H1 (cell line): ENCODE measurements at regions of chr5 and their contacts with region 1.

Region 1: GRCh38 chr5:42889311-42889933 is 77.7 kb upstream of the SELENOP start:
- DNase-seq: peak; percentile 43 to 81
- H3K4me3 ChIP-seq: no peak overlapping the region
- H3K27ac ChIP-seq: no peak overlapping the region
- H3K4me1 ChIP-seq: no peaks in the 10 kb centered on the region
- H3K27me3 ChIP-seq: no peaks in the 10 kb centered on the region
- CTCF ChIP-seq: peak; percentile 53 to 84 (median 83)
- EP300 ChIP-seq: no peak
- POLR2A ChIP-seq: no peak
- RAD21 ChIP-seq: peak; percentile 95 to 98

Region 2: GRCh38 chr5:42605490-42605889 is 283.9 kb before region 1 on chr5:
- CTCF ChIA-PET with region 1: no interaction called
- POLR2A ChIA-PET with region 1: no interaction called
- DNase-seq: no peak
- H3K4me3 ChIP-seq: no peak overlapping the region
- H3K27ac ChIP-seq: no peak overlapping the region
- H3K4me1 ChIP-seq: no peaks in the 10 kb centered on the region
- H3K27me3 ChIP-seq: no peaks in the 10 kb centered on the region
- CTCF ChIP-seq: no peak
- EP300 ChIP-seq: no peak
- POLR2A ChIP-seq: no peak
- RAD21 ChIP-seq: no peak

Region 3: GRCh38 chr5:42745426-42745825 is 144.0 kb before region 1 on chr5:
- CTCF ChIA-PET with region 1: interaction called, 15 read pairs
- POLR2A ChIA-PET with region 1: no interaction called
- DNase-seq: peak; percentile 25 to 83
- H3K4me3 ChIP-seq: no peak overlapping the region
- H3K27ac ChIP-seq: no peak overlapping the region
- H3K4me1 ChIP-seq: no peaks in the 10 kb centered on the region
- H3K27me3 ChIP-seq: no peaks in the 10 kb centered on the region
- CTCF ChIP-seq: peak; percentile 40 to 79 (median 67)
- EP300 ChIP-seq: no peak
- POLR2A ChIP-seq: no peak
- RAD21 ChIP-seq: peak; percentile 64 to 74

Region 4: GRCh38 chr5:42767491-42768105 is 121.8 kb before region 1 on chr5:
- CTCF ChIA-PET with region 1: interaction called, 13 read pairs
- POLR2A ChIA-PET with region 1: no interaction called
- DNase-seq: no peak
- H3K4me3 ChIP-seq: no peak overlapping the region
- H3K27ac ChIP-seq: no peak overlapping the region
- H3K4me1 ChIP-seq: no peaks in the 10 kb centered on the region
- H3K27me3 ChIP-seq: no peaks in the 10 kb centered on the region
- CTCF ChIP-seq: peak in 2 of 3 experiments; percentile 18 to 36; a peak in 2 of 4 replicates
- EP300 ChIP-seq: no peak
- POLR2A ChIP-seq: no peak
- RAD21 ChIP-seq: peak; percentile 68 to 72

Region 5: GRCh38 chr5:42876375-42876844 is 13.0 kb before region 1 on chr5:
- CTCF ChIA-PET with region 1: interaction called, 31 read pairs
- POLR2A ChIA-PET with region 1: no interaction called
- DNase-seq: no peak
- H3K4me3 ChIP-seq: no peak overlapping the region
- H3K27ac ChIP-seq: no peak overlapping the region
- H3K4me1 ChIP-seq: no peaks in the 10 kb centered on the region
- H3K27me3 ChIP-seq: no peaks in the 10 kb centered on the region
- CTCF ChIP-seq: no peak
- EP300 ChIP-seq: no peak
- POLR2A ChIP-seq: no peak
- RAD21 ChIP-seq: no peak

Region 6: GRCh38 chr5:42908509-42909488 is 19.4 kb after region 1 on chr5:
- CTCF ChIA-PET with region 1: interaction called, 12 read pairs
- POLR2A ChIA-PET with region 1: no interaction called
- DNase-seq: peak; percentile 47 to 88
- H3K4me3 ChIP-seq: peak overlapping the region; percentile 49 to 66 (median 55); a peak in 7 of 8 replicates
- H3K27ac ChIP-seq: no peak overlapping the region
- H3K4me1 ChIP-seq: no peaks in the 10 kb centered on the region; a peak in 1 of 7 replicates
- H3K27me3 ChIP-seq: peaks cover 0 to 12% (median 8%) of the 10 kb centered on the region in 4 experiments; a peak in 6 of 7 replicates
- CTCF ChIP-seq: peak; percentile 74 to 92 (median 89)
- EP300 ChIP-seq: no peak
- POLR2A ChIP-seq: no peak
- RAD21 ChIP-seq: peak; percentile 68 to 77